Activated CD8-positive, alpha-beta T cell treated with anti-CD3 and anti-CD28 coated beads, Interleukin-2, amount 10 ng/mL, durations not matched to agents 7 days and 5 days (primary cell): ENCODE measurements at regions of chr3 and their contacts with region 1.

Region 1: GRCh38 chr3:132522353-132522752 is 74.7 kb upstream of the ACKR4 start:
- DNase-seq: no peak
- ATAC-seq: peak; percentile 65
- H3K4me3 Mint-ChIP-seq: peak overlapping the region; percentile 1
- H3K27ac Mint-ChIP-seq: peak overlapping the region; percentile 22
- H3K4me1 Mint-ChIP-seq: peaks cover 21% of the 10 kb centered on the region
- H3K27me3 Mint-ChIP-seq: no peaks in the 10 kb centered on the region

Region 2: DNA sequence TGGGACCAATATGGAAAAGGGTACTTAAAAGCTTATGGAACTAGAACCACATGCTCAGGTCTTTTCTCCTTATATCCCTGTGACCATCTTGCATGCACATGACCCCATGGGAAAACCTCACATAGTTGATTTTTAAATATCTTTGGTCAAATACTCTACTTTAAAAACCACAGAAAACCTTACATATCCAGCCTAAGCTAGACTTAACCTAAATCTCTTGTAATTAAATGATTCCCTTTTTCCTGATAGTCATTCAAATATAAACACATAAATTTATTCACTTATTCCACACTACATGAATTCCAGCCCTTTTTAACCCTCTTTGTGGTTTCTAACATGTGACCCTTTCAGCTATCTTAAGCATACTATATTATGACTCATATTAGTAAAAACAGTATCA is 58.3 kb before region 1 on chr3:
- CTCF ChIA-PET with region 1: no interaction called
- POLR2A ChIA-PET with region 1: no interaction called
- DNase-seq: no peak
- ATAC-seq: no peak
- H3K4me3 Mint-ChIP-seq: no peak overlapping the region
- H3K27ac Mint-ChIP-seq: no peak overlapping the region
- H3K4me1 Mint-ChIP-seq: no peaks in the 10 kb centered on the region
- H3K27me3 Mint-ChIP-seq: no peaks in the 10 kb centered on the region

Region 3: DNA sequence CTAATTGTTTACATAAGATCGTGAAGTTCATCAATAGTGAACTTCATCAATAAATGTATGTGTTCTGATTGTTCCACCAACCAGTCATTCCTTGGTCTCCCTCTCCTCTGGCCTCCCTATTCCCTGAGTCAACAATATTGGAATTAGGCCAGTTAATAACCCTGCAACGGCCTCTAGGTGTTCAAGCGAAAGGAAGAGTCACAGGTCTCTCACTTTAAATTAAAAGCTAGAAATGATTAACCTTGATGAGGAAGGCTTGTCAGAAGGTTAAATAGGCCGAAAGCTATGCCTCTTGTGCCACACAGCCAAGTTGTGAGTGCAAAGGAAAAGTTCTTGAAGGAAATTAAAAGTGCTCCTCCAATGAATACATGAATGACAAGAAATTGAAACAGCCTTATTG is 14.7 kb before region 1 on chr3:
- CTCF ChIA-PET with region 1: interaction called, 10 read pairs
- POLR2A ChIA-PET with region 1: no interaction called
- DNase-seq: no peak
- ATAC-seq: no peak
- H3K4me3 Mint-ChIP-seq: no peak overlapping the region
- H3K27ac Mint-ChIP-seq: no peak overlapping the region
- H3K4me1 Mint-ChIP-seq: peaks cover 2% of the 10 kb centered on the region
- H3K27me3 Mint-ChIP-seq: no peaks in the 10 kb centered on the region

Region 4: DNA sequence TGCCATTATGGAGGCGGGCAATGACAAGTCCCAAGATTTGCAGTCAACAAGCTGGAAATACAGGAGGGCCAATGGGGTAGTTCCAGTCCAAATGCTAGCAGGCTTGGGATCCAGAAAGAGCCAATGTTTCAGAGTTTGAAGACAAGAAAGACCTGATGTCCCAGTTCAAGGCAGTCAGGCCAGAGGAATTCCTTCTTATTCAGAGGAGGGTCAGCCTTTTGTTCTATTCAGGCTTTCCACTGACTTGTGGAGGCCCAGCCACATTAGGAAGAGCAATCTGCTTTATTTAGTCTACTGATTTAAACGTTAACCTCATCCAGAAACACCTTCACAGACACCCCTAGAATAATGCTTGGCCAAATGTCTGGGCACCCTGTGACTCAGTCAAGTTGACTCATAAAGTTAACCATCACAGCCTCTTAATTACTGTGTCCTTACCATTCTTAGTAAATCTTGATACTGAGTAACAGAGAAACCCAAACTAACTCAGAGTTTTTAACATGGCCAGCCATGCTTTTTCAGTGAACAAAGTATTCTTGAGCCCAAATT is 250.8 kb after region 1 on chr3:
- CTCF ChIA-PET with region 1: no interaction called
- POLR2A ChIA-PET with region 1: no interaction called
- DNase-seq: no peak
- ATAC-seq: no peak
- H3K4me3 Mint-ChIP-seq: no peak overlapping the region
- H3K27ac Mint-ChIP-seq: no peak overlapping the region
- H3K4me1 Mint-ChIP-seq: no peaks in the 10 kb centered on the region
- H3K27me3 Mint-ChIP-seq: peaks cover 2% of the 10 kb centered on the region